Sigmoid colon (tissue), 7 donors: ENCODE measurements at regions of chr6 and their contacts with region 1.

Region 1: DNA sequence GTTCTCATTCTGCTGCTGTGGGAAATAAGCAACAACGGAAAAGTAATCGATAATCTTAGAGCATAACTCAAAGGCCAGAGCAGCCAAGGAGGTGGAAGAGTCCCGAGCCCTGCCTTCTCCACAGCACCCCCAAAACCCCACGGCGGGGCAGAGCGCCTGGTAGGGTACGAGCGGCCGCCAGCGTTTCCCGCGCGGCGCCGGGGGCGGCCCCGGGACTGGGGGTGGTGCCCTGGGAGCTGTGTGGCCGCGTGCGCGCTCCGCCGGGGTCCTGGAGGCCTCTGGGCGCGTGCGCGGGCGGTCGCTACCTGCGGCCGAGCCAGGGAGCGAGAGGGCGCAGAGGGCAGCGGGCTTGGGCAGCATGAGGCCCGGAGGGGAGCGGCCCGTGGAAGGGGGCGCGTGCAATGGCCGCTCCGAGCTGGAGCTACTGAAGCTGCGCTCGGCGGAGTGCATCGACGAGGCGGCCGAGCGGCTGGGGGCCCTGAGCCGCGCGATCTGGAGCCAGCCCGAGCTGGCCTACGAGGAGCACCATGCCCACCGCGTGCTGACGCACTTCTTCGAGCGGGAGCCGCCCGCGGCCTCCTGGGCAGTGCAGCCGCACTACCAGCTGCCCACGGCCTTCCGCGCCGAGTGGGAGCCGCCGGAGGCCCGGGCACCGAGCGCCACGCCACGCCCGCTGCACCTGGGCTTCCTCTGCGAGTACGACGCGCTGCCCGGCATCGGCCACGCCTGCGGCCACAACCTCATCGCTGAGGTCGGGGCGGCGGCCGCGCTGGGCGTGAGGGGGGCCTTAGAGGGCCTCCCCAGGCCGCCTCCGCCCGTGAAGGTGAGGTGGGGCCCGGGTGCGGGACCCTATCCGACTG is at the start of gene PM20D2:
- DNase-seq: peak; percentile 83
- H3K4me3 ChIP-seq: peak within 1 kb of the TSS; percentile 75 to 91 (median 82)
- H3K27ac ChIP-seq: peak within 1 kb of the TSS; percentile 92 to 95 (median 93)
- H3K4me1 ChIP-seq: peaks cover 0 to 37% (median 31%) of the 10 kb centered on the region in 4 donors
- H3K27me3 ChIP-seq: no peaks in the 10 kb centered on the region
- CTCF ChIP-seq: no peak
- EP300 ChIP-seq: no peak
- POLR2A ChIP-seq: peak in 1 of 2 donors; percentile 19
- total RNA-seq, gene PM20D2: 20.3 to 48.5 (median 23.9) TPM

Region 2: GRCh38 chr6:88989215-88989614 is 156.8 kb before region 1 on chr6:
- intact Hi-C with region 1: no loop called
- DNase-seq: no peak
- H3K4me3 ChIP-seq: no peak overlapping the region
- H3K27ac ChIP-seq: no peak overlapping the region
- H3K4me1 ChIP-seq: no peaks in the 10 kb centered on the region
- H3K27me3 ChIP-seq: no peaks in the 10 kb centered on the region
- CTCF ChIP-seq: no peak
- EP300 ChIP-seq: no peak
- POLR2A ChIP-seq: no peak

Region 3: GRCh38 chr6:89022798-89023197 is 123.2 kb before region 1 on chr6:
- intact Hi-C with region 1: loop called (anchors 5 kb)
- DNase-seq: no peak
- H3K4me3 ChIP-seq: no peak overlapping the region
- H3K27ac ChIP-seq: peak overlapping the region; percentile 78 to 89 (median 84)
- H3K4me1 ChIP-seq: peaks cover 0 to 43% (median 41%) of the 10 kb centered on the region in 4 donors
- H3K27me3 ChIP-seq: no peaks in the 10 kb centered on the region
- CTCF ChIP-seq: no peak
- EP300 ChIP-seq: peak; percentile 60 to 97 (median 95)
- POLR2A ChIP-seq: no peak

Region 4: GRCh38 chr6:89122625-89123024 is 23.4 kb before region 1 on chr6:
- intact Hi-C with region 1: no loop called
- DNase-seq: no peak
- H3K4me3 ChIP-seq: no peak overlapping the region
- H3K27ac ChIP-seq: peak overlapping the region in 1 of 4 donors; percentile 28
- H3K4me1 ChIP-seq: peaks cover 0 to 8% (median 3%) of the 10 kb centered on the region in 4 donors
- H3K27me3 ChIP-seq: no peaks in the 10 kb centered on the region
- CTCF ChIP-seq: peak in 3 of 4 experiments; percentile 20 to 56 (median 34)
- EP300 ChIP-seq: no peak
- POLR2A ChIP-seq: no peak

Region 5: DNA sequence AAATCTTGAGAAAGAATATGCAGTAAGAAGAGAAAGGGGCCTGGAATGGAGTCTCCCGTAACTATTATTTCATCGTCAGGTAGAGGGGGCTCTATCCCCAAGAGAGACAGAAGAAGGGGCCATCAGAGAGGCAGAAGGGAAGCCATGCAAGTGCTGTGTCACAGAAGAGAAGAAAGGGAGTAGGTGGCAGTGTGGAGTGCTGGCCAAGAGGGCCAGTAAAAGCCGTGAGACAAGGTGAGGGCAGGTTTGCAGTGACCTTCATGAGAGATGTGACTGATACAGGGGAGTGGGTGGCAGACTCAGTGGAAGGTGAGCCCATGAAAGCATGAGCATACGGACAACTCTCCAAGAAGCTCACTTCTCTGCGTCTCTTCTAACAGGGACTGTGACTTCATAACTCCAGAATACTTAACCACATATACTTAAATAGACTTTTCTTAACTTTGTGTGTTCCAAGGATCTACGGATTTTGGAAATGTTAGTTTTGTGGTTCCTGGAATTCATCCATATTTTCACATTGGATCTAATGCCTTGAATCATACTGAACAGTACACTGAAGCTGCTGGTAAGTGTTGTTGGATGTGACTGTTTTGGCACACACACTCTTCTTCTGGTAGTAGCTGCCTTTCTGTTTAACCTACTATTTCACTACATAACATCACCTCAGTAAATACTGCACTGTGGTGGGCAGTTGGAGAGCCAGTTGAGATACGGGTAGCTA is 15.5 kb after region 1 on chr6:
- intact Hi-C with region 1: loop called (anchors 2 kb)
- DNase-seq: no peak
- H3K4me3 ChIP-seq: peak overlapping the region in 2 of 4 donors; percentile 9 to 10
- H3K27ac ChIP-seq: peak overlapping the region; percentile 79 to 94 (median 86)
- H3K4me1 ChIP-seq: peaks cover 0 to 37% (median 34%) of the 10 kb centered on the region in 4 donors
- H3K27me3 ChIP-seq: no peaks in the 10 kb centered on the region
- CTCF ChIP-seq: no peak
- EP300 ChIP-seq: peak in 1 of 4 donors; percentile 35
- POLR2A ChIP-seq: no peak

Region 6: DNA sequence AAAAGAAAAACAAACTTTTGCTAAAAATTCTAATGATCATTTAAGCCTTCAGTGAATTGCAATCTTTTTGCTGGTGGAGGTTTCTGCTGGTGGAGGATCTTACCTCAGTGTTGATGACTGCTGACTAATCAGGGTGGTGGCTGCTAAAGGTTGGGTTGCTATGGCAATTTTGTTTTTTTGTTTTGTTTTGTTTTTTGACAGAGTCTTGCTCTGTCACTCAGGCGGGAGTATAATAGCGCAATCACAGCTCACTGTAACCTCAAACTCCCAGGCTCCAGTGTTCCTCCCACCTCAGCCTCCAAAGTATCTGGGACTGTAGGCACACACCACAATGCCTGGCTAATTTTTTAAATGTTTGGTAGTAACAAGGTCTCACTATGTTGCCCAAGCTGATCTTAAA is 381.6 kb after region 1 on chr6:
- intact Hi-C with region 1: no loop called
- DNase-seq: no peak
- H3K4me3 ChIP-seq: no peak overlapping the region
- H3K27ac ChIP-seq: no peak overlapping the region
- H3K4me1 ChIP-seq: peaks cover 0 to 11% (median 5%) of the 10 kb centered on the region in 4 donors
- H3K27me3 ChIP-seq: no peaks in the 10 kb centered on the region
- CTCF ChIP-seq: no peak
- EP300 ChIP-seq: no peak
- POLR2A ChIP-seq: no peak